MCF 10A (cell line): ENCODE measurements at regions of chr9 and their contacts with region 1.

Region 1: GRCh38 chr9:34403554-34404380 is 27.1 kb upstream of the MYORG start:
- DNase-seq: peak; percentile 71
- H3K4me3 Mint-ChIP-seq: no peak overlapping the region
- H3K27ac Mint-ChIP-seq: no peak overlapping the region
- H3K4me1 Mint-ChIP-seq: no peaks in the 10 kb centered on the region
- H3K27me3 Mint-ChIP-seq: no peaks in the 10 kb centered on the region
- CTCF ChIP-seq: peak; percentile 94

Region 2: GRCh38 chr9:34072868-34073590 is 330.7 kb before region 1 on chr9:
- CTCF ChIA-PET with region 1: no interaction called
- POLR2A ChIA-PET with region 1: no interaction called
- intact Hi-C with region 1: no loop called
- DNase-seq: peak; percentile 80
- H3K4me3 Mint-ChIP-seq: no peak overlapping the region
- H3K27ac Mint-ChIP-seq: peak overlapping the region; percentile 81
- H3K4me1 Mint-ChIP-seq: peaks cover 22% of the 10 kb centered on the region
- H3K27me3 Mint-ChIP-seq: no peaks in the 10 kb centered on the region
- CTCF ChIP-seq: no peak

Region 3: GRCh38 chr9:34430843-34431437 is 27.2 kb after region 1 on chr9:
- CTCF ChIA-PET with region 1: interaction called, 18 read pairs
- POLR2A ChIA-PET with region 1: interaction called, 3 read pairs
- intact Hi-C with region 1: no loop called
- DNase-seq: peak; percentile 70
- H3K4me3 Mint-ChIP-seq: no peak overlapping the region
- H3K27ac Mint-ChIP-seq: no peak overlapping the region
- H3K4me1 Mint-ChIP-seq: no peaks in the 10 kb centered on the region
- H3K27me3 Mint-ChIP-seq: no peaks in the 10 kb centered on the region
- CTCF ChIP-seq: no peak

Region 4: DNA sequence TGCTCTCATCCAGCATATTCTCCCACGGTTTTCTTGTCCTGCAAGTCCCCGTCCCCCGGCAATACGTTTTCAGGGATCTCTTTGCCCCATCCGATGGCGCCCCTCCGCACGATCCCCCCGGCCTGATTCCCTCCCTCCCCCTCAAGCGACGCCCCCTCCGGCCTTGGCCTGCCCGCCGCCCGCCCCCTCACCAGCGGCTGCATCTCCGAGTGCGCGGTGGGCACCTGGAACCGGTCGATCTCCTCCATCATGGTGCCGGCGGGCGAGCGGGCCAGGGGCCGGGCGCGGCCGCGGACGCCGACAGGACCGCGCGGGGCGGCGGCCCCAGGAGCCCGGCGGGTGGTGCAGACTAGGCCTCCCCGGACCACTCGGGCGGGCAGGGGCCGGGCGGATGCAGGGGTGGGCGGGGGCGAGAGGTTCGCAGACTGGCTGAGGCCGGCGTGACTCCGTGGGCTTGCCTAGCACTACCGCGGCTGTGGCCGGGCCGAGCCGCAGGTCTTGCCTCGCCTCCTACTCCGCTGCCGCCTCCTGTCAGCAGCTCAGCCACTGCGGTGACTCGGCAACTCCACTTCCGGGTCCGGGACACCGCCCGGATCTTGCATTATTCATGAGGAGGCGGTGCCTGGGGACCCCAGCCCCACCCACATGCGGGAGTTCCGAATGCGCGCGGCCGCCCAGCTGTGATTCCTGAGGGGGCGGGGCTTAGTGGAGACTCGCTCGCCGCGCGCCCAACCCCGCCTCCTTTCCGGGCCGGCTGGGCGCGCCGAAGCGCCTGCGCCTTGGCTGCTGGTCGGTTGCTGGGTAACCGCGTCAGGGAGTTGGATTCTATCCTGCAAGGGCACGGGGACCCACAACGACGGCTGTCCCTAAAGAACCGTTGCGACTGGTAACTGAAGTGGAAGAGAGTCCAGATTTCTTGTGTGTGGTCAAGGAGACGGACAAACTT is 54.5 kb after region 1 on chr9 and contains the starts of genes DNAI1 and FAM219A:
- CTCF ChIA-PET with region 1: interaction called, 22 read pairs
- POLR2A ChIA-PET with region 1: no interaction called
- intact Hi-C with region 1: no loop called
- DNase-seq: peak; percentile 98
- H3K4me3 Mint-ChIP-seq: peak within 1 kb of the TSS; percentile 98
- H3K27ac Mint-ChIP-seq: peak within 1 kb of the TSS; percentile 97
- H3K4me1 Mint-ChIP-seq: peaks cover 37% of the 10 kb centered on the region
- H3K27me3 Mint-ChIP-seq: no peaks in the 10 kb centered on the region
- CTCF ChIP-seq: no peak
- total RNA-seq, gene DNAI1: not detected in 2 replicates
- total RNA-seq, gene FAM219A: 19.3 and 20.3 TPM in 2 replicates

Region 5: GRCh38 chr9:34500623-34501267 is 97.0 kb after region 1 on chr9:
- CTCF ChIA-PET with region 1: interaction called, 41 read pairs
- POLR2A ChIA-PET with region 1: interaction called, 5 read pairs
- intact Hi-C with region 1: loop called (anchors 1 kb)
- DNase-seq: peak; percentile 64
- H3K4me3 Mint-ChIP-seq: no peak overlapping the region
- H3K27ac Mint-ChIP-seq: no peak overlapping the region
- H3K4me1 Mint-ChIP-seq: peaks cover 7% of the 10 kb centered on the region
- H3K27me3 Mint-ChIP-seq: peaks cover 6% of the 10 kb centered on the region
- CTCF ChIP-seq: peak; percentile 94

Region 6: GRCh38 chr9:34546834-34547827 is 143.4 kb after region 1 on chr9:
- CTCF ChIA-PET with region 1: interaction called, 14 read pairs
- POLR2A ChIA-PET with region 1: no interaction called
- intact Hi-C with region 1: no loop called
- DNase-seq: peak; percentile 58
- H3K4me3 Mint-ChIP-seq: no peak overlapping the region
- H3K27ac Mint-ChIP-seq: no peak overlapping the region
- H3K4me1 Mint-ChIP-seq: no peaks in the 10 kb centered on the region
- H3K27me3 Mint-ChIP-seq: peaks cover 16% of the 10 kb centered on the region
- CTCF ChIP-seq: peak; percentile 67

Region 7: GRCh38 chr9:34603610-34604231 is 200.0 kb after region 1 on chr9:
- CTCF ChIA-PET with region 1: interaction called, 42 read pairs
- POLR2A ChIA-PET with region 1: no interaction called
- intact Hi-C with region 1: loop called (anchors 1 kb)
- DNase-seq: peak; percentile 82
- H3K4me3 Mint-ChIP-seq: no peak overlapping the region
- H3K27ac Mint-ChIP-seq: no peak overlapping the region
- H3K4me1 Mint-ChIP-seq: peaks cover 9% of the 10 kb centered on the region
- H3K27me3 Mint-ChIP-seq: no peaks in the 10 kb centered on the region
- CTCF ChIP-seq: peak; percentile 77